Left ventricle myocardium inferior (tissue), 1 donor: ENCODE measurements at regions of chr10 and their contacts with region 1.

Region 1: DNA sequence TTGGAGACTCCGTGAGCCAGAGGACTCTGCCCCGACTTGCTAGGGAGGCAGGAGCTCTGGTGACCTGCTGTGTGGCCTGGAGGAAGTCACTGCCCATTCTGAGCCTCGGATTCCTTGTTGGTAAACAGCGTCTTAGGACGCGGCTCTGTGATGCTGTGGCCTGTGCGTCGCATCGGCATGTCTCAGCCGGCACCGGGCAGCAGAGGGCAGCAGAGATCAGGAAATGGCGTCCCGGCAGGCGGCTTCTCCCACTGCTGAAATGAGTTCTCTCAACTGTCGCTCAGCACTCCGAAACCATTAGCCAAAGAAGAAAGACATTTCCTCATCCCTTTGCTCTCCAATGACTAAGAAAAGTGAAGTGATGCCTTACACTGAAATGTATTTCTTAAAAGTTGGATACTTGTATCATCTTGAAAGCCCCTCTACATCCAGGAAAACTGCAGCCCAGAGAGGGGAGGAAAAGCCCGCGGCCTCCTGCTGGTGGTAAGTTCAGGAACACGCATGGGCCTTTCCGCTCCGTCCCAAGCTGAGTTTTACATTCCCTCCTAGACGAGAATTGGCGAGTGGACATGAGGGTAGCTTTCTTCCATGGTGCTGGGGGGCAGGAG is 91.7 kb downstream of the WDR11 start:
- DNase-seq: peak; percentile 70
- H3K4me3 ChIP-seq: peak overlapping the region; percentile 17
- H3K27ac ChIP-seq: no peak overlapping the region
- H3K4me1 ChIP-seq: no peaks in the 10 kb centered on the region
- H3K27me3 ChIP-seq: peaks cover 47% of the 10 kb centered on the region
- CTCF ChIP-seq: peak; percentile 86

Region 2: DNA sequence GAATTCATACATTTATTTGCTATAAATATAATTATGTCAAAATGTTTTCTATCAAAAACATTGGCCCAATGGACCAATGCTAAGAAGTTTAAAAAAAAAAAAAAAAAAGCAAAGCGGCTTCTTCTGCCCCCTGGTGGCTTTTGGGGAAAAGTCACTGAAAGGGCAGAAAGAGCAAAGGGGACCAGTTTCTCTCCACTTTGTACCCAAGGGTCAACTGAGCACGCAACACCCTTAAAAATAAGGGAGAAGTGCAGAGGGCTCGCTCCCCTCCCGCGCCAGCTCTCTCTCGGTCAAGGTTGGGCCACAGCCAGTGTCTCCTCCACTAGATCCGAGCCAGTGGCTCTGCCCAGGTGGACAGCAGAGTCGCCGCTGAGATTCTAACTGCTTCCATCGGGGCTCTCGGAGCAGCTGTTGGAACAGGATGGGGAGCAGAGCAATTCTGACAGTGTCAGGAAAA is 791.7 kb after region 1 on chr10:
- intact Hi-C with region 1: loop called (anchors 5 kb)
- DNase-seq: no peak
- H3K4me3 ChIP-seq: peak overlapping the region; percentile 31
- H3K27ac ChIP-seq: no peak overlapping the region
- H3K4me1 ChIP-seq: peaks cover 19% of the 10 kb centered on the region
- H3K27me3 ChIP-seq: peaks cover 45% of the 10 kb centered on the region
- CTCF ChIP-seq: peak; percentile 76

Region 3: GRCh38 chr10:121899727-121900126 is 956.8 kb after region 1 on chr10:
- intact Hi-C with region 1: loop called (anchors 10 kb)
- DNase-seq: no peak
- H3K4me3 ChIP-seq: no peak overlapping the region
- H3K27ac ChIP-seq: no peak overlapping the region
- H3K4me1 ChIP-seq: peaks cover 2% of the 10 kb centered on the region
- H3K27me3 ChIP-seq: no peaks in the 10 kb centered on the region
- CTCF ChIP-seq: no peak